GM18951 (cell line): ENCODE measurements at regions of chr9 and their contacts with region 1.

Region 1: GRCh38 chr9:109903515-109904138 is 123.6 kb downstream of the PALM2AKAP2 start:
- POLR2A ChIP-seq: no peak

Region 2: DNA sequence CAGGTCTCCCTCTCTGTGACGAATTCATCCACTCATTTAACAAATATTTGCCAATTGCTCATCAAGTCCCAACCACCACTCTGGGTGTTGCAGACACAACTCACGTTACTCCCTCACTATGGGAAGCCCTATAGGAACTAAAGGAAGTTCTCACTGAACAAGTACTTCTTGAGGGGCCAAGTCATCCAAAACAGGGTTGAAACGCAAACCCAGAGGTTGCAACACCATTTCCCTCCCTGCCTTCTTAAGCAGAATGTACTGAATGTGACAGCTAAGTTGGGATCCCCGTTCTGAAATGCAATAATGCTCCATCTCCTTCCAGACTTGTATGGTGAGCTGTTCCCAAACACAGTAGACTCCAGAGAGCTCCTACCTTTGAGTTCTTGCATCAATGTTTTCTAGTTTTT is 617.1 kb before region 1 on chr9:
- in situ Hi-C with region 1: no loop called
- POLR2A ChIP-seq: no peak

Region 3: GRCh38 chr9:109426626-109427402 is 476.8 kb before region 1 on chr9:
- in situ Hi-C with region 1: no loop called
- POLR2A ChIP-seq: no peak

Region 4: DNA sequence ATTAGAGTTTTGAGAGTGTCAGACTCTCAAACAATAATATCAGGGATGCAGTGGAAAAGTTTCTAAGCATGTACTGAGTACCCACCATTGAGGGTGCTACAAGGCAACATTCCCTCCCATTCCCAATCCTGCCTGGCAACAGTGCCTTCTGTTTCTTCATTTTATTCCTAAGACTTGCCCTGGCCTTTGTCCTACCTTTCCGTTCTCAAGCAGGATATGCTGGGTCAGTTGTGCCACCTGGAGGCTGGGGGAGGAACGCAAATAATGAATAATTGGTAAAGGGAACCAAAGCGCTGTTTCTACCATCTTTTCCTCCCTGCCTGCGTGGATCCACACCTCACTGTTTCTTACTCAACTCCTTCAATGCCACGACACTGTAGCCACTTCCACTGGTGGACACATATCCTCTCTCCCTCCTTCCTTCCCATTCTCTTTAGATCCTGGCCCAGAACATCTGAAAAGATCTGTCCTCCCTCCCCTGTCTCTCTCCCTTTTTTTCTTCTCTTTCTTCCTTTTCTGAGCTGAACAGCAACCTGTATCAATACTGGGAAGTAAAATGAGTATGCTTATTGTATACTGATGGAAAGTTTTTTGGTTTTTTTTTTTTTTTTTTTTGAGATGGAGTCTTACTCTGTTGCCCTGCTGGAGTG is 154.8 kb after region 1 on chr9:
- in situ Hi-C with region 1: loop called (anchors 5 kb)
- POLR2A ChIP-seq: no peak